ENCODE measurements at regions of chr7 and their contacts with region 1.

Region 1: DNA sequence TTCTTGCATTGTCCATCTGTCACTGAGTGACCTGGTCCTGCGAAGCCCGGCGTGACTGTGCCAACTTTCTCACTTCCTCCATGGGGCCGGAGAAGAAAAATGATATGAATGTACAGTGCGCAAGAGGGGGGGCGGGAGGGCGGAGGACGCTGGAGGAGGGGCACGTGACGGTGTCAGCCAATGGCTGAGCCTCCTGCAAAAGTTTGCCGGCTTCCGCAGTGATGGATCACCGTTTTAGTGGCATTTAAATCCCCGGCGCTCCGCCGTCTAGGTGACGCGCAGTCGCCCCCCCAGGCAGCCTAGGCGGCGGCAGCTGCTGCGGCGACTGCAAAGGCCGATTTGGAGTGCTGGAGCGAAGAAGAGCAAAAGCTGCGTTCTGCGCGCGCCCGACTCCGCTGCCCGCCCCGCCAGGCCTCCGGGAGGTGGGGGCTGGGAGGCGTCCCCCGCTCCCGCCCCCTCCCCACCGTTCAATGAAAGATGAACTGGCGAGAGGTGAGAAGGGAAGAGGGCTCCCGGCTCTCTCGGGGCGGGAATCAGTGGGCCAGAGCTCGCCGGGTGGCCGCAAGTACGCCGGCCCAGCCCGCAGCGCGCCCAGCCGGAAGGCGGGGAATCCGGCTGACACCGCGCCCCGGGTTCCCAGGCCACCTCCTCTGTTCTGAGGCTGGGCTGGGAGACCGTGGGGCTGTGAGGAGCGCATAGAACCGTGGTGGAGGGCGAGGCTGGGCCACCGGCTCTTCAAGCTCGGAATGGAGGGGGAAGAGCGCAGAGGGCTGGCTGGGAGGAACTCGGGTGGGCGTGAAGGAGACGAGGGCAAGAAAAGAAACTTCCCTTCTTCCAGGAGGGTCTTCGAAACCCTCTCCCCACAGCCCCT is at the start of gene HOXA1:
- DNase-seq: peak; percentile 93
- H3K4me3 Mint-ChIP-seq: peak within 1 kb of the TSS; percentile 83
- H3K27ac Mint-ChIP-seq: peak within 1 kb of the TSS; percentile 99
- H3K4me1 Mint-ChIP-seq: peaks cover 46% of the 10 kb centered on the region
- H3K27me3 Mint-ChIP-seq: no peaks in the 10 kb centered on the region
- CTCF ChIP-seq: no peak
- total RNA-seq, gene HOXA1: 5.6 and 7.1 TPM in 2 replicates

Region 2: DNA sequence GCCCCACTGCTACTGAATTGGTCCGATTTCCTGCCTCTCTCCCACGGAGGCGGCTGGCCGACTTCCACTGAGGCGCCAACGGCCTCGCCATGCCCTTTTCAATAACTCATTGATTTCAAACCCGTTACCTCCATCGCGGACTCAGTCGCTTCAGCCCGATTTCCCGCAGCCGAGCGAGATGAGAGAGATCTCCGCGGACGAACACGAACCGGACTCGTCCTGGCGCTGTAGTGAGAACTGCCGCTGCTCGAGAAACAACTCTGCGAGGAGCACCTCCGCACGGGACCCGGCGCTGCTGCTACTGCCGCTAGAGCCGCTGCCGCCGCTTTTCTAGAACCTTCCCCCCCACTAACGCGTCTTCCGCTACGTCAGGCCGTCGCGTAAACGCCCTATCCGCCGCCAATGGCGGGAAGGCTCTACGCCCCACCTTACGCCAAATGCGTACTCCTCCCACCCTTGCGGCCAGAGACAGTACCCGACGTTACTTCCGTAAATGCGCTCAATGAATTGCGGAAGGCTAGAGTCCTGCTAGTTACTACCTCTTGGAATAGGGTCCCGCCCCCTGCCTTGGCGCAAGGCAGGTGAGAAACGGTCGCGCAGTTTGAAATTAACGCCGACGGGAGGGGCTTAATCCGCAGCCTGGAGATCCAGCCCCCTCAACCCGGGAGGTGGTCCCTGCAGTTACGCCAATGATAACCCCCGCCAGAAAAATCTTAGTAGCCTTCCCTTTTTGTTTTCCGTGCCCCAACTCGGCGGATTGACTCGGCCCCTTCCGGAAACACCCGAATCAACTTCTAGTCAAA is 895.5 kb before region 1 on chr7 and contains the start of gene HNRNPA2B1:
- CTCF ChIA-PET with region 1: no interaction called
- POLR2A ChIA-PET with region 1: interaction called, 17 read pairs
- intact Hi-C with region 1: no loop called
- DNase-seq: peak; percentile 98
- H3K4me3 Mint-ChIP-seq: peak within 1 kb of the TSS; percentile 98
- H3K27ac Mint-ChIP-seq: peak within 1 kb of the TSS; percentile 99
- H3K4me1 Mint-ChIP-seq: peaks cover 37% of the 10 kb centered on the region
- H3K27me3 Mint-ChIP-seq: no peaks in the 10 kb centered on the region
- CTCF ChIP-seq: no peak
- total RNA-seq, gene HNRNPA2B1: 592 and 646 TPM in 2 replicates

Region 3: GRCh38 chr7:26864309-26865093 is 231.6 kb before region 1 on chr7 and contains the start of gene SKAP2:
- CTCF ChIA-PET with region 1: interaction called, 198 read pairs
- POLR2A ChIA-PET with region 1: interaction called, 663 read pairs
- intact Hi-C with region 1: no loop called
- DNase-seq: peak; percentile 99
- H3K4me3 Mint-ChIP-seq: peak within 1 kb of the TSS; percentile 97
- H3K27ac Mint-ChIP-seq: peak within 1 kb of the TSS; percentile 96
- H3K4me1 Mint-ChIP-seq: peaks cover 31% of the 10 kb centered on the region
- H3K27me3 Mint-ChIP-seq: no peaks in the 10 kb centered on the region
- CTCF ChIP-seq: no peak
- total RNA-seq, gene SKAP2: 24.8 and 27.5 TPM in 2 replicates

Region 4: DNA sequence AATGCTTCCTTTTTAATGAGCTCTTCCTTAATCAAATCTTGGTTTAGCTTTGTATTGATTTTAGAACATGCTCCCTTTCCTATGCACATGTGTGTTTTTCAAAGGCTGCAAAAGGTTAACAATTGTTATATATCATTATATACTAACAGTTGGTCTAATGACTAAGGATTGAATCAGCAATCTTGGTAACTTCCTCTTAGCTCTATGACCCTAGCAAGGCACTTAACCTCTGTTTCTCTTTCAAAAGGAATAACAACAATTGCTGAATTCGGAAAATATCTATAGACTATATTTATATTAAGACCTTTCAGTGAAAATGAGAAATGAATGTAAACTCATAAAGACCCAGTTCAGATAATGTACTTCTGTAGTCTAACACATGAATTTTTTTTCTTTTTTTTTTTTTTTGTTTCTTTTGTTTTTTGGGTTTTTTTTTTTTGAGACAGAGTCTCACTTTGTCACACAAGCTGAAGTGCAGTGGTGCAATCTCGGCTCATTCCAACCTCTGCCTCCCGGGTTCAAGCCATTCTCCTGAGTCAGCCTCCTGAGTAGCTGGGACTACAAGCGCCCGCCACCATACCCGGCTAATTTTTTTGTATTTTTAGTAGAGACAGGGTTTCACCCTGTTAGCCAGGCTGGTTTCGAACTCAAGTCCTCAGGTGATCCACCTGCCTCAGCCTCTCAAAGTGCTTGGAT is 49.1 kb before region 1 on chr7:
- CTCF ChIA-PET with region 1: interaction called, 3 read pairs
- POLR2A ChIA-PET with region 1: interaction called, 8 read pairs
- intact Hi-C with region 1: loop called (anchors 5 kb)
- DNase-seq: peak; percentile 63
- H3K4me3 Mint-ChIP-seq: no peak overlapping the region
- H3K27ac Mint-ChIP-seq: peak overlapping the region; percentile 35
- H3K4me1 Mint-ChIP-seq: peaks cover 7% of the 10 kb centered on the region
- H3K27me3 Mint-ChIP-seq: no peaks in the 10 kb centered on the region
- CTCF ChIP-seq: no peak

Region 5: GRCh38 chr7:27124096-27124901 is 28.2 kb after region 1 on chr7:
- CTCF ChIA-PET with region 1: interaction called, 19 read pairs
- POLR2A ChIA-PET with region 1: interaction called, 485 read pairs
- intact Hi-C with region 1: no loop called
- DNase-seq: no peak
- H3K4me3 Mint-ChIP-seq: peak overlapping the region; percentile 29
- H3K27ac Mint-ChIP-seq: no peak overlapping the region
- H3K4me1 Mint-ChIP-seq: peaks cover 20% of the 10 kb centered on the region
- H3K27me3 Mint-ChIP-seq: no peaks in the 10 kb centered on the region
- CTCF ChIP-seq: no peak

Region 6: GRCh38 chr7:27150568-27151340 is 54.6 kb after region 1 on chr7:
- CTCF ChIA-PET with region 1: interaction called, 16 read pairs
- POLR2A ChIA-PET with region 1: interaction called, 13 read pairs
- intact Hi-C with region 1: no loop called
- DNase-seq: peak; percentile 72
- H3K4me3 Mint-ChIP-seq: peak overlapping the region; percentile 79
- H3K27ac Mint-ChIP-seq: no peak overlapping the region
- H3K4me1 Mint-ChIP-seq: peaks cover 15% of the 10 kb centered on the region
- H3K27me3 Mint-ChIP-seq: no peaks in the 10 kb centered on the region
- CTCF ChIP-seq: peak; percentile 89

Region 7: GRCh38 chr7:27179503-27180430 is 83.6 kb after region 1 on chr7:
- CTCF ChIA-PET with region 1: no interaction called
- POLR2A ChIA-PET with region 1: no interaction called
- intact Hi-C with region 1: no loop called
- DNase-seq: peak; percentile 69
- H3K4me3 Mint-ChIP-seq: no peak overlapping the region
- H3K27ac Mint-ChIP-seq: no peak overlapping the region
- H3K4me1 Mint-ChIP-seq: peaks cover 2% of the 10 kb centered on the region
- H3K27me3 Mint-ChIP-seq: no peaks in the 10 kb centered on the region
- CTCF ChIP-seq: peak; percentile 84

Measured in MCF 10A (cell line).